ENCODE measurements at regions of chr5 and their contacts with region 1.

Region 1: GRCh38 chr5:111223889-111224563 is at the start of gene CAMK4:
- DNase-seq: peak; percentile 69
- H3K4me3 ChIP-seq: peak within 1 kb of the TSS; percentile 34 to 62 (median 60)
- H3K27ac ChIP-seq: no peak within 1 kb of the TSS
- H3K4me1 ChIP-seq: peaks cover 5% of the 10 kb centered on the region
- H3K27me3 ChIP-seq: peaks cover 0 to 2% of the 10 kb centered on the region in 2 experiments
- CTCF ChIP-seq: peak in 1 of 2 donors; percentile 37
- POLR2A ChIP-seq: no peak
- total RNA-seq, gene CAMK4: 5.4 and 8.2 TPM in 2 replicates

Region 2: DNA sequence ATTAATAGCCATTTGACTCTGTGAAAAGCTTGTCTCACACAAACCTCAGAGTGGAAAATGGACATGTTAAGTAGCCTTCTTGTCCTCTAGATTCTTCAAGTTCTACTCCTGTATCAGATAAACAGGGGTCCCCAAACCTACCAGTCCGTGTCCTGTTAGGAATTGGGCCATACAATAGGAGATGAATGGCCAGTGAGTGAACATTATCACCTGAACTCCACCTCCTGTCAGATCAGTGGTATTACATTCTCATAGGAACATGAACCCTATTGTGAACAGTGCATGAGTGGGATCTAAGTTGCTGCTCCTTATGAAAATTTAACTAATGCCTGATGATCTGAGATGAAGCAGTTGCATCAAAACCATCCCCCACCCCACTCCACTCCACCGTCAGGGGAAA is 633.8 kb before region 1 on chr5:
- CTCF ChIA-PET with region 1: no interaction called
- POLR2A ChIA-PET with region 1: no interaction called
- dilution Hi-C with region 1: no loop called
- intact Hi-C with region 1: no loop called
- DNase-seq: peak; percentile 9
- H3K4me3 ChIP-seq: no peak overlapping the region
- H3K27ac ChIP-seq: no peak overlapping the region
- H3K4me1 ChIP-seq: no peaks in the 10 kb centered on the region
- H3K27me3 ChIP-seq: no peaks in the 10 kb centered on the region
- CTCF ChIP-seq: peak in 1 of 2 donors; percentile 16
- POLR2A ChIP-seq: no peak

Region 3: GRCh38 chr5:111486055-111486454 is 262.0 kb after region 1 on chr5:
- CTCF ChIA-PET with region 1: no interaction called
- POLR2A ChIA-PET with region 1: no interaction called
- dilution Hi-C with region 1: no loop called
- intact Hi-C with region 1: loop called (anchors 10 kb)
- DNase-seq: no peak
- H3K4me3 ChIP-seq: no peak overlapping the region
- H3K27ac ChIP-seq: no peak overlapping the region
- H3K4me1 ChIP-seq: peaks cover 5% of the 10 kb centered on the region
- H3K27me3 ChIP-seq: no peaks in the 10 kb centered on the region
- CTCF ChIP-seq: no peak
- POLR2A ChIP-seq: no peak

Region 4: GRCh38 chr5:112154940-112155686 is 931.1 kb after region 1 on chr5:
- CTCF ChIA-PET with region 1: no interaction called
- POLR2A ChIA-PET with region 1: no interaction called
- dilution Hi-C with region 1: no loop called
- intact Hi-C with region 1: loop called (anchors 5 kb)
- DNase-seq: no peak
- H3K4me3 ChIP-seq: no peak overlapping the region
- H3K27ac ChIP-seq: no peak overlapping the region
- H3K4me1 ChIP-seq: no peaks in the 10 kb centered on the region
- H3K27me3 ChIP-seq: peaks cover 0 to 4% of the 10 kb centered on the region in 2 experiments
- CTCF ChIP-seq: no peak
- POLR2A ChIP-seq: no peak